ENCODE measurements at regions of chr1 and their contacts with region 1.

Region 1: DNA sequence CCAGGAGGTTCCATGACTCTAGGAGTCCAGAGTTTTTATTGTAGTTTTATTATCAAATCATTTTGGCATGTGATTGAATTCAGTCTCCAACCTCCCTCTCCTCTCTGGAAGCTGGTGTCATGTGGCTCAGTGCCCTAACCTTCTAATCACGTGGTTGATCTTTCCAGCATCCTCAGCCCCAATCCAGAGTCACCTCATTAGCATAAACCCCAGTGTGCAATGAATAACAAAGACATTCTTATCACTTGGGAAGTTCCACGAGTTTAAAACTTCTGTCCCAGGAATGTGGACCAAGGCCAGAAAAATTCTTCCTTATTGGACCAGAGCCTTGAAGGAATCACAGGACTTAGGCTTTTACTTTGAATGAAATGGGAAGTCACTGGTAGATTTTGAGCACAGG is 52.2 kb downstream of the KIRREL1 start:
- DNase-seq: peak in 1 of 2 experiments; percentile 17
- H3K4me3 ChIP-seq: no peak overlapping the region; a peak in 1 of 8 replicates
- H3K27ac ChIP-seq: no peak overlapping the region
- H3K4me1 ChIP-seq: peaks cover 2 to 19% (median 12%) of the 10 kb centered on the region in 4 experiments
- H3K27me3 ChIP-seq: no peaks in the 10 kb centered on the region
- CTCF ChIP-seq: no peak
- EP300 ChIP-seq: no peak
- POLR2A ChIP-seq: no peak
- RAD21 ChIP-seq: no peak

Region 2: GRCh38 chr1:157955221-157955620 is 90.4 kb before region 1 on chr1:
- CTCF ChIA-PET with region 1: no interaction called
- POLR2A ChIA-PET with region 1: no interaction called
- DNase-seq: no peak
- H3K4me3 ChIP-seq: no peak overlapping the region
- H3K27ac ChIP-seq: no peak overlapping the region
- H3K4me1 ChIP-seq: no peaks in the 10 kb centered on the region
- H3K27me3 ChIP-seq: no peaks in the 10 kb centered on the region
- CTCF ChIP-seq: no peak
- EP300 ChIP-seq: no peak
- POLR2A ChIP-seq: no peak
- RAD21 ChIP-seq: no peak

Region 3: DNA sequence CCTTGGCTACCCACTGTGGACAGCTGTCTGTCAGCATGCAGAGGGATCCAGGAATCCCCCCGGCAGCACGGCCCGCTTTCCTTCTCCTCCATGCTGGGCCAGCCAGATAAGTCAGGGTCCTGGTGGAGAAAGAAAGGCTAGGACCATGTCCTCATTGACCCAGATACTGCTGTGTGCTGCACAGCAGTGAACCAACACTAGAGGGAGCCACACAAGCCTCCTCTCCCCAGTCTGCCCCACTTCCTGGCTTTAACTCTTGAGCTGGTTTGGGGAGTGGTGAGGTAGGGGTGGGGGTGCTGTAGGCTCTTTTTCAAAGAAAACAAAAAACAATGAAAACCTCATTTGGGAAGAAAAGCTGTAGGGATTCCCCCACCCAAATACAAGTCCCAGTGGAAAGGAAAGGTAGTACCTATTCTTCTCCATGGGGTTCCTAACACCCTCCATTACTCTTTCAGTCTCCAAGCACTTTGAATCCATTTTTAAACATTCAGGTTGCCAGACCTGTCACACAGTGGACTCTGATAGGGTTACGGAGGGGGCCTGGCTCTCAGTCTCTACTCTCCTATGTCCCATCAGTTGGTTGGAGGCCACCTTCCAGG is 50.2 kb after region 1 on chr1:
- CTCF ChIA-PET with region 1: interaction called, 12 read pairs
- POLR2A ChIA-PET with region 1: no interaction called
- DNase-seq: peak; percentile 50 to 73
- H3K4me3 ChIP-seq: no peak overlapping the region
- H3K27ac ChIP-seq: no peak overlapping the region
- H3K4me1 ChIP-seq: peaks cover 8 to 25% (median 18%) of the 10 kb centered on the region in 4 experiments
- H3K27me3 ChIP-seq: no peaks in the 10 kb centered on the region
- CTCF ChIP-seq: peak; percentile 94 to 96 (median 94)
- EP300 ChIP-seq: no peak
- POLR2A ChIP-seq: no peak
- RAD21 ChIP-seq: peak; percentile 77 to 81

Region 4: GRCh38 chr1:158227904-158228623 is 182.4 kb after region 1 on chr1:
- CTCF ChIA-PET with region 1: no interaction called
- POLR2A ChIA-PET with region 1: no interaction called
- DNase-seq: no peak
- H3K4me3 ChIP-seq: no peak overlapping the region
- H3K27ac ChIP-seq: no peak overlapping the region
- H3K4me1 ChIP-seq: no peaks in the 10 kb centered on the region
- H3K27me3 ChIP-seq: no peaks in the 10 kb centered on the region
- CTCF ChIP-seq: no peak
- EP300 ChIP-seq: no peak
- POLR2A ChIP-seq: no peak
- RAD21 ChIP-seq: no peak